ENCODE measurements at regions of chr9 and their contacts with region 1.

Region 1: GRCh38 chr9:3578786-3579185 is 53.0 kb upstream of the RFX3 start:
- DNase-seq: no peak
- H3K4me3 ChIP-seq: no peak overlapping the region
- CTCF ChIP-seq: no peak
- POLR2A ChIP-seq: no peak

Region 2: DNA sequence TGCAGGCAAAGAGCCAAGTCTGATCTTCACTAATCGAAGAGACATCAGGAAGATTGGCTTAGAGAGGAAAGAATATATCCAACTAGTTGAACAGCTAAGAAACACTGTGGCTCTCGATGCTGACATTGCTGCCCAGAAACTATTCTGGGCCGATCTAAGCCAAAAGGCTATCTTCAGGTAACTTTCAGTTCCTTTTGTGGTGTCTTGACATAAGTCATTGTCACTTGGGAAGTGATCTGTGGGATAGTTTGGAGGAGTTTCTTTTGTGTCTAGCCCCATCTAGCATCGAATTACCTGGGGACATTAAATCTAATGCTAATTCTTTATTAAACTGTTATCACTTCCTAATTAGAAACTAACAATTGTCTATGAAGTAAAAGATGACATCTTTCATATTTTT is 933.2 kb before region 1 on chr9:
- intact Hi-C with region 1: loop called (anchors 5 kb)
- DNase-seq: no peak
- H3K4me3 ChIP-seq: no peak overlapping the region
- CTCF ChIP-seq: no peak
- POLR2A ChIP-seq: no peak

Region 3: GRCh38 chr9:3597792-3598191 is 19.0 kb after region 1 on chr9:
- intact Hi-C with region 1: no loop called
- DNase-seq: no peak
- H3K4me3 ChIP-seq: no peak overlapping the region
- CTCF ChIP-seq: no peak
- POLR2A ChIP-seq: no peak

Region 4: DNA sequence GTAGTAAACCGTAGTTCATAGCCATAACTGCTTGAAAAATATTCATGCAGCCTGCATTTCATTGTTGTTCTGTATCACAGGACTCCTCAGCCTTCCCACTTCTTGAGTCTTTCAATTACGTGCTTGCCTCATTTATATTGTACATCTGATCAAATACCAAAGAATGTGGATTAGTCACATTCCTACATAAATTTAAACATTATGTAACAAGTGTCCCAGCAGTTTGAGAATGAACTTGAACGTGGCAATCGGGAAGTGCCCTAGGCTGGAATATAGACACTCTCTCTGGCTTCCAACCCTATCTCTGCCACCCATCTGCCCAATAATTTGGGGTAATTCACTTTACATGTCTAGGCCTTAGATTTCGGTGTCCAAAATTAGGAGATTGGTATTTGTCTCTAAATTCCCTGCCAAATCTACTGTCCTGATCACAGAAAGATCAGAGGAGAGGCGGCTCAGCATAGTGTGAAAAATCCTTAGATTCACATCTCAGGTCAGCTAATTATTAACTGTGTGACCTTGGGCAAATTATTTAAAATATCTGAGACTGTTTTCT is 162.0 kb after region 1 on chr9:
- intact Hi-C with region 1: no loop called
- DNase-seq: no peak
- H3K4me3 ChIP-seq: no peak overlapping the region
- CTCF ChIP-seq: no peak
- POLR2A ChIP-seq: no peak

Measured in lower leg skin (tissue), 4 donors.